Activated naive CD8-positive, alpha-beta T cell treated with anti-CD3 and anti-CD28 coated beads, Interleukin-2, amount 10 ng/mL, durations not matched to agents 7 days and 5 days (primary cell): ENCODE measurements at regions of chr5 and their contacts with region 1.

Region 1: GRCh38 chr5:157189223-157189622 is 8.6 kb downstream of the ITK start:
- DNase-seq: no peak
- ATAC-seq: peak; percentile 24
- H3K4me3 Mint-ChIP-seq: peak overlapping the region; percentile 85
- H3K27ac Mint-ChIP-seq: peak overlapping the region; percentile 82
- H3K4me1 Mint-ChIP-seq: peaks cover 73% of the 10 kb centered on the region
- H3K27me3 Mint-ChIP-seq: no peaks in the 10 kb centered on the region

Region 2: GRCh38 chr5:156735477-156735876 is 453.7 kb before region 1 on chr5:
- POLR2A ChIA-PET with region 1: no interaction called
- DNase-seq: no peak
- ATAC-seq: no peak
- H3K4me3 Mint-ChIP-seq: no peak overlapping the region
- H3K27ac Mint-ChIP-seq: no peak overlapping the region
- H3K4me1 Mint-ChIP-seq: no peaks in the 10 kb centered on the region
- H3K27me3 Mint-ChIP-seq: peaks cover 20% of the 10 kb centered on the region

Region 3: GRCh38 chr5:157148734-157149615 is 40.2 kb before region 1 on chr5:
- POLR2A ChIA-PET with region 1: interaction called, 194 read pairs
- DNase-seq: peak; percentile 60
- ATAC-seq: peak; percentile 64
- H3K4me3 Mint-ChIP-seq: no peak overlapping the region
- H3K27ac Mint-ChIP-seq: peak overlapping the region; percentile 69
- H3K4me1 Mint-ChIP-seq: peaks cover 35% of the 10 kb centered on the region
- H3K27me3 Mint-ChIP-seq: no peaks in the 10 kb centered on the region

Region 4: DNA sequence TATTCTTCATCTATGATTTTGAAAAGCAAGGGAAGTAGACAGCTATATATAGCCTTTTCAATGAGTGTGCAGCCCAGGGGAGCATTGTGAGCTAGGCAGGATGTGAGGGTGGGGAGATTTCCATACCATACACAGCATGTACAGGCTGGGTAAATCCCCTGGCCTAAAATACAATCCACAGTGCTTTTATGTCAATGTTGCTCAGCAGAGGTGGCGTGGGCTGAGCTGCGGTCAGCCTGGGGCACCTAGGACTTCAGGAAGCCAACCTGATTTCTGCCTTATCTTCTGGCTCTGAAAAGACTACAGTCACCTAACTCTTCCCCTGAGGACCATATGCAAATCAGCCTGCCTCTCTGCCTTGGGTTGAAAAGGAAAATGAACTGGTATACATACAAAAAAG is 16.8 kb before region 1 on chr5:
- POLR2A ChIA-PET with region 1: interaction called, 116 read pairs
- DNase-seq: peak; percentile 76
- ATAC-seq: peak; percentile 99
- H3K4me3 Mint-ChIP-seq: peak overlapping the region; percentile 73
- H3K27ac Mint-ChIP-seq: peak overlapping the region; percentile 88
- H3K4me1 Mint-ChIP-seq: peaks cover 54% of the 10 kb centered on the region
- H3K27me3 Mint-ChIP-seq: no peaks in the 10 kb centered on the region

Region 5: DNA sequence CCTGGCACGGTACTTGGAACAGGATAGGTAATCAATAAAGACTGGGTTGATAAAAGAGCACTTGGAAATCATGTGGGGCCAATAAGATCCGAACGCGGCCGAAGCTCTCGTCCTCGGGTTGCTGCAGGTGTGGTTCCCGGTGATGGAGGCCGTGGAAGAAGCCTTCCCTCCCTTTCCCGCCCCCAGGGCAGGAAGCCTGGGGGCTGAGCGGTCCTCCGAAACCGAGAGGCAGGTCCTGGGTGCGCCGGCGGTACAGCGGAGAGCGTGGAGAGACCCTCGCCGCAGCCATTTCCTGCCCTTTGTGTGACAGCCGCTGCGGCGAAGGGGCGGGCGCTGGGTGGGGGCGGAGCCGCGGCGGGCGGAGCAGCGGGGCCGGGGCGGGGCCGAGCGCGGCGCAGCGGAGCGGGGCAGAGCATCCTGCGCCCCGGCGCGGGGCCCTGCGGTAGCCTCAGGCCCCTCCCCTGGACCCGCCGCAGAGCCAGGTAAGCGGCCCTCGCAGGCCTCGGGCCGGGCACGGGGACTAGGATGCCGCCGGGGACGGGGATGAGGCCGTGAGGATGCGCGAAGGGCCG is 76.6 kb after region 1 on chr5 and contains the start of gene CYFIP2:
- POLR2A ChIA-PET with region 1: interaction called, 16 read pairs
- DNase-seq: peak; percentile 91
- ATAC-seq: peak; percentile 80
- H3K4me3 Mint-ChIP-seq: peak within 1 kb of the TSS; percentile 93
- H3K27ac Mint-ChIP-seq: peak within 1 kb of the TSS; percentile 95
- H3K4me1 Mint-ChIP-seq: peaks cover 66% of the 10 kb centered on the region
- H3K27me3 Mint-ChIP-seq: no peaks in the 10 kb centered on the region
- total RNA-seq, gene CYFIP2: 458 to 480 TPM